ENCODE measurements at regions of chr6 and their contacts with region 1.

Region 1: DNA sequence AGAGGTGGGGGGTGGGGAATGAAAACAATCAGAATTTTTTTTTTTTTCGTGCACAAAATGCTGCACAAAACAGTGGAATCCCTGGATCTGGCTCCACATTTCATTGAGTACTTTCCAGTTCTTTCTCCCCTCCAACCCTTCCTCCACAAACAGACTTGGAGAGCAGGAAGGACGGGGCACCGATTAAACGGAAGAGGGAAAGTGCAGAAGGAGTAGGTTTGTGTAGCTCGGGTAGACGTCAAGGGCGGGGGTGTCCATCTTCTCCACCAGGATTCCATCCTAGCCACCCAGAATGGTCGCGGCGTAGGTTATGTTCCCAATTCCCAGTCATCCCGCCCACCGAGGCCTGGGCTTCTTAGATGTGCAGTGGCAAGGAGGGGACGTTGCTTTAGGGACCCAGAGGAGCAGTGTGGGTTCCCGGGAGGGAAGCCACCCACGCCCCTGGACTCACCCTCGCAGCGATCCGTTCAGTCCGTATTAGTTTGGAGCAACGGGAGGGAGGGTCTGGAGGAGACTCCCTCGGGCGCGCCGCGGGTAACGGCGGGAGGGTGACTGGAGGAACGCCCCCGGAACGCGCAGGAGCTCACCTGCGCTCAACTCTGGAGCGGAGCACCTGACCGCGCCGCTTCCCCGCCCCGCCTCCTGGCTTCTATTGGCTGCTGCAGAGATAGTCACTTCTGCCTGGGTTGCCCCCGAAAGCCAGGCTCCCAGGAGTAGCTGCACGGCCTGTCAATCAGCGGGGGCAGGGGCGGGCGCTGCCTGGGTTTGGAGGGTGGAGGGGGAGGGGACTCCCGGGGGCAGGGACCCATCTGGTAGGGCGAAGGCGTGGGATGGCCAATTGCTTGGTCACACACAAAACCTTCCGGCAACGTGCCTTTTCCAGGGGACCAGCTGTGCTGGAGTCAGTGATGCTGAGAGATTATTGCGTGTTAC is at the start of gene ENPP5:
- DNase-seq: peak; percentile 90 to 99 (median 95)

Region 2: GRCh38 chr6:46129629-46130511 is 40.8 kb before region 1 on chr6 and contains the start of gene ENPP4:
- intact Hi-C with region 1: loop called (anchors 5 kb)
- DNase-seq: peak; percentile 81 to 99 (median 89)